ENCODE measurements at regions of chr17 and their contacts with region 1.

Region 1: GRCh38 chr17:82065638-82066303 is at the start of gene DUS1L:
- DNase-seq: peak in 1 of 2 donors; percentile 77
- H3K4me3 ChIP-seq: peak within 1 kb of the TSS; percentile 87 to 92
- H3K27ac ChIP-seq: peak within 1 kb of the TSS; percentile 92 to 95
- H3K4me1 ChIP-seq: peaks cover 13 to 18% of the 10 kb centered on the region in 2 donors
- H3K27me3 ChIP-seq: no peaks in the 10 kb centered on the region
- CTCF ChIP-seq: no peak
- total RNA-seq, gene DUS1L: 111 TPM

Region 2: GRCh38 chr17:81814748-81815645 is 250.8 kb before region 1 on chr17:
- intact Hi-C with region 1: no loop called
- DNase-seq: no peak
- H3K4me3 ChIP-seq: no peak overlapping the region
- H3K27ac ChIP-seq: no peak overlapping the region
- H3K4me1 ChIP-seq: no peaks in the 10 kb centered on the region
- H3K27me3 ChIP-seq: no peaks in the 10 kb centered on the region
- CTCF ChIP-seq: no peak

Region 3: DNA sequence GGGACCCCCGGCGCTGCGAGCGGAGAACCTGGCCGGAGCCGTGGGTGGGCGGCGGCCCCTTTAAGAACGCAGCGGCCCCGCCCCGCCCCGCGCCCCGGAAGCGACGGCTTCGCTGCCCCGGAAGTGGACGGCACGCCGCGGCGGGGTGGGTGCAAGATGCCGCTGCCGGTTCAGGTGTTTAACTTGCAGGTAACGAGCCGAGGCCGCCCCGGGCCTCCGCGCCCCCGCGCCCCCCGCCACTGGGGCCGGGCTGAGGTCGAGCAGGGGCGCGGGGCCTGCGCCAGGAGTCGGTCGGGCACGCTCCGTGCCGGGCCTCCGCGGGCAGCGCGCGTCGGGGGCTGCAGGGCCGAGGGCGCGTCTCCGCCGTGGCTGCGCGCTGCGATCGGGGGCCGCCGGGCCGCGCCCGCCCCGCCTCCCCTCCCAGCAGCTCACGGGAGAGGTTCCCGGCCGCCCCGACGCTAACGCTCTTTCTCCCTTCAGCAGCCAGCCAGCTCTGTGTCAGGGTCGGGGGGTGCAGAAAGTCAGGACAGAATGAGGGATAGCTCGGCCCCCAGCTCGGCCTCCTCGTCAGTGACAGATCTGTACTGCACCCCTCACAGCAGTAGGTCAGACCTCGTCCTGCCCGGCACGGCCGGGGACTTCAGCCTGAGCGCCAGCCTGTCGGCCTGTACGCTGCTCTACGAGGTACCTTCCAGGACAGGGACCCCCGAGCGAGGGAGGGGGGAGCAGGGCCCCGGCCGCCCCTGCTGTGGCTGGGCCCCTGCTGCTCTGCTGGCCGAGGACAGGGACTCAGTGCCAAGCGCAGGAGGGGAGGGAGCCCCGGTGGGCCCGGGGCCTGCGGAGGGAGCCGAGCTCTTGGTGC is 13.8 kb before region 1 on chr17 and contains the starts of genes GPS1 and RFNG:
- intact Hi-C with region 1: loop called (anchors 2 kb)
- DNase-seq: peak in 1 of 2 donors; percentile 80
- H3K4me3 ChIP-seq: peak within 1 kb of the TSS; percentile 83 to 94
- H3K27ac ChIP-seq: peak within 1 kb of the TSS; percentile 11 to 14
- H3K4me1 ChIP-seq: peaks cover 18 to 19% of the 10 kb centered on the region in 2 donors
- H3K27me3 ChIP-seq: no peaks in the 10 kb centered on the region
- CTCF ChIP-seq: no peak
- total RNA-seq, gene GPS1: 42.1 TPM
- total RNA-seq, gene RFNG: 73.7 TPM

Region 4: GRCh38 chr17:82098072-82098821 is 32.5 kb after region 1 on chr17 and contains the start of gene FASN:
- intact Hi-C with region 1: loop called (anchors 1 kb)
- DNase-seq: peak; percentile 62 to 95
- H3K4me3 ChIP-seq: peak within 1 kb of the TSS; percentile 67 to 98
- H3K27ac ChIP-seq: peak within 1 kb of the TSS; percentile 94 to 96
- H3K4me1 ChIP-seq: peaks cover 14 to 16% of the 10 kb centered on the region in 2 donors
- H3K27me3 ChIP-seq: no peaks in the 10 kb centered on the region
- CTCF ChIP-seq: peak; percentile 28 to 51 (median 41)
- total RNA-seq, gene FASN: 90.9 TPM

Measured in ascending aorta (tissue), 2 donors.